ENCODE measurements at regions of chr4 and their contacts with region 1.

Region 1: GRCh38 chr4:183261953-183262775 is 57.9 kb downstream of the CLDN22 start:
- DNase-seq: peak; percentile 84

Region 2: DNA sequence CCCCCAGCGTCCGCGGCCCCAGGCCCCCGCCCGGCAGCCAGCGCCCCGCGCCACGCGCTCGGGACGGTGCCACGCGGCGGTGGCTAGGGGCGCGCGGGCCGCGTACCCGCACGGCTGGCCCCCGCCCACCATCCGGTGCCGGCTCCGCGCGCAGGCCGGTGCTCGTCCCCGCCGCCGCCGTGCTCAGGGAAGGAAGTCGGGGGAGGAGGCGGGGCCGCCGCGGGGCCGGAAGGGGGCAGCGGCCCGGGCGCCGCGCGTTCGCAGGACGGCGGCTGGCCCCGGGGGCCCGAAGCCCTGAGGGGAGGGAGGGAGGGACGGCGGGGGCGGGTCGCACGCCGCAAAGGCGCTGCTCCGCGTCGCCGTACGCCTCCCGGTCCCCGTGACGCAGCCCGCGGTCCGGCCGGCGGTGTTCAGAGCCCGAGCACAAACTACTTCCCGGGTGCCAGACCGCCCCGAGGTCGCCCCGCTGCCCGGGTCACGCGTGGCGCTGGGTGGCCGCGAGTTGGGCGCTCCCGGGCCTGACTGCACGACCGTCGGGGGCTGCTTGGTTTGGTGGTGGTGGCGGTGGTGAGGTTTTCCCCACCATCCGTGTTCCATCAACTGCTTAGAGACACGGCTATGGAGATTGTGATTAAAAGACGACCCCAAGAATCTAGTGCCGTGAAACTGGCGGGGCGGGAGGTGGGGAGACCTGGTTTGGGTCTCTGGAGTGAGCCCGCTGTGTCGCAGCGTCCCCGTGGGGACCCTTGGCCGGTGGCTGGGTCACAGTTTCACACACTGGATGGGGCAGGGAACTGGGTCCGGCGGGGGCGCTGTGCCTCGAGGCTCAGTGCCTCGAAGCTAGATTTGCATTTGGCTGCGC is 344.8 kb before region 1 on chr4 and contains the start of gene DCTD:
- in situ Hi-C with region 1: no loop called
- DNase-seq: peak; percentile 75
- total RNA-seq, gene DCTD: 107 and 122 TPM in 2 replicates

Region 3: DNA sequence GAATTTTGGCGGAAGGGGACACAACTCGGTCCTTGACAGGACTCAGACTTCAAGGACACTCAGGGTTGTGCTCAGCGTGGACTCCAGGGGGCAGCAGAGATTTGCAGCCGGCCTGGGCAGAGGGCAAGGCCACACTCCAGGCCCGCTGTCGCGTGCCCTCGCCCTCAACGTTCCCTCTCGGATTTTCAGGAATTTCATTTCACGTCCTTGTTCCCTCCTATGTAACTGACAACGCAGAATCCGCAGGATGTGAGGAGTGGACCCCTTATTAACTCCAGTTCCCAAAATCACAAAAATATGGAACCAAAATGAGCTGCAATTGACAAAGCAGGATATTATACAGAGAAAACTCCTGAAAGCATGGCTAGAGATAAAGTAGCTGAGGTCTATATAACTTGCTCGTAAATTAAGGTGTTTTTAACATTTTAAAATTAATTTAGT is 323.9 kb before region 1 on chr4:
- in situ Hi-C with region 1: loop called (anchors 25 kb)
- DNase-seq: peak; percentile 29

Region 4: GRCh38 chr4:183074296-183074990 is 187.7 kb before region 1 on chr4:
- in situ Hi-C with region 1: loop called (anchors 25 kb)
- DNase-seq: no peak

Region 5: GRCh38 chr4:183229397-183229796 is 32.8 kb before region 1 on chr4:
- in situ Hi-C with region 1: no loop called
- DNase-seq: no peak